MCF 10A (cell line): ENCODE measurements at regions of chr14 and their contacts with region 1.

Region 1: GRCh38 chr14:91177073-91178034 is 63.5 kb downstream of the DGLUCY start:
- DNase-seq: peak; percentile 80
- H3K4me3 Mint-ChIP-seq: no peak overlapping the region
- H3K27ac Mint-ChIP-seq: no peak overlapping the region
- H3K4me1 Mint-ChIP-seq: no peaks in the 10 kb centered on the region
- H3K27me3 Mint-ChIP-seq: no peaks in the 10 kb centered on the region
- CTCF ChIP-seq: peak; percentile 86

Region 2: GRCh38 chr14:90903101-90903500 is 274.3 kb before region 1 on chr14:
- CTCF ChIA-PET with region 1: interaction called, 264 read pairs
- POLR2A ChIA-PET with region 1: interaction called, 12 read pairs
- intact Hi-C with region 1: loop called (anchors 1 kb)
- DNase-seq: peak; percentile 71
- H3K4me3 Mint-ChIP-seq: no peak overlapping the region
- H3K27ac Mint-ChIP-seq: no peak overlapping the region
- H3K4me1 Mint-ChIP-seq: no peaks in the 10 kb centered on the region
- H3K27me3 Mint-ChIP-seq: no peaks in the 10 kb centered on the region
- CTCF ChIP-seq: peak; percentile 81

Region 3: DNA sequence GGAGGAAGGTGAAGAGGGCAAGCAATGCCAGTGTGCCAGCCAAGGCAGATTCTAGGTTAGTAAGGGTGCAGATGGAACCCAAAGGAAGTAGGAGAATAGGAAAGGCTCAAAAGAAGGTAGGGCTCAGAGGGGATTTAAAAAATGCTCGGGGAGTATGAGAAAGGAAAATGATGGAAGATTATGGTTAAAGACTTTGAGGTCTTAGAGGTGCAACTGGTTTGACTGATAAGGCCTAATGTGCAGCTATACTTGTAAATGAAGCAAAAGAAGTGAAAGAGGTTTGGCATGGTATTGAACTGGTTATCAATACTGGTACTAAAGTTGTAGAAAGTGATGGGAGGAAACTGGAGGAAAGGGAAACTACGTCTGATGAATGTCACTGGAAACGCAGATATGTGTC is 211.6 kb before region 1 on chr14:
- CTCF ChIA-PET with region 1: interaction called, 10 read pairs
- POLR2A ChIA-PET with region 1: no interaction called
- intact Hi-C with region 1: no loop called
- DNase-seq: no peak
- H3K4me3 Mint-ChIP-seq: no peak overlapping the region
- H3K27ac Mint-ChIP-seq: no peak overlapping the region
- H3K4me1 Mint-ChIP-seq: peaks cover 10% of the 10 kb centered on the region
- H3K27me3 Mint-ChIP-seq: no peaks in the 10 kb centered on the region
- CTCF ChIP-seq: no peak

Region 4: DNA sequence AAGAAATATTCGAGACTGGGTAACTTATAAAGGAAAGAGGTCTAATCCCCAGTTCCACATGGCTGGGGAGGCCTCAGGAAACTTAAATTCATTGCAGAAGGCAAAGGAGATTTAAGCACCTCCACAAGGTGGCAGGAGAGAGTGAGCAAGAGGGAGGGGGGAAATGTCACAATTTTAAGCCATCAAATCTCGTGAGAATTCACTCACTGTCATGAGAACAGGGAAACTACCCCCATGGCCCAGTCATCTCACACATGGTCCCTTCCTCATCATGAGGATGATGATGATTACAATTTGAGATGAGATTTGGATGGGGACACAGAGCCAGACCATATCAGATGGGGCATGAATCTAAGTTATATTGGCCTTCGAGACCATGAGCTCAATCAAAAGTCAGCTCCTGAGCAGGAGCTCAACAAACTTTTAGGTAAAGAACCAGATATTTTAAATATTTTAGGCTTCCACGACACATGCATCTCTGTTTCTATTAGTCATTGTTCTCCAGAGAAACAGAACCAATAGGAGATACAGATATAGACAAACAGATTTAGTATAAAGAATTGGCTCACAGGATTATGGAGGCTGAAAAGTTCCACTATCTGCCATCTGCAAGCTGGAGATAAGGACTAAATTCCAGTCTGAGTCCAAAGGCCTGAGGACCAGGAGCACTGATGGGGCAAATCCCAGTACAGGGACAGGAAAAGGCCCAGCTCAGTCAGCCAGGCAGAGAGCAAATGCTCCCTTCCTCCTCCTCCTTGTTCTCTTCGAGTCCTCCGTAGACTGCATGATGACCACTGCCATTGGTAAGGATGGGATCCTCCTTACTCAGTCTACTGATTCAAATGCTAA is 38.6 kb before region 1 on chr14:
- CTCF ChIA-PET with region 1: interaction called, 80 read pairs
- POLR2A ChIA-PET with region 1: no interaction called
- intact Hi-C with region 1: loop called (anchors 1 kb)
- DNase-seq: peak; percentile 68
- H3K4me3 Mint-ChIP-seq: no peak overlapping the region
- H3K27ac Mint-ChIP-seq: no peak overlapping the region
- H3K4me1 Mint-ChIP-seq: peaks cover 4% of the 10 kb centered on the region
- H3K27me3 Mint-ChIP-seq: no peaks in the 10 kb centered on the region
- CTCF ChIP-seq: peak; percentile 49

Region 5: DNA sequence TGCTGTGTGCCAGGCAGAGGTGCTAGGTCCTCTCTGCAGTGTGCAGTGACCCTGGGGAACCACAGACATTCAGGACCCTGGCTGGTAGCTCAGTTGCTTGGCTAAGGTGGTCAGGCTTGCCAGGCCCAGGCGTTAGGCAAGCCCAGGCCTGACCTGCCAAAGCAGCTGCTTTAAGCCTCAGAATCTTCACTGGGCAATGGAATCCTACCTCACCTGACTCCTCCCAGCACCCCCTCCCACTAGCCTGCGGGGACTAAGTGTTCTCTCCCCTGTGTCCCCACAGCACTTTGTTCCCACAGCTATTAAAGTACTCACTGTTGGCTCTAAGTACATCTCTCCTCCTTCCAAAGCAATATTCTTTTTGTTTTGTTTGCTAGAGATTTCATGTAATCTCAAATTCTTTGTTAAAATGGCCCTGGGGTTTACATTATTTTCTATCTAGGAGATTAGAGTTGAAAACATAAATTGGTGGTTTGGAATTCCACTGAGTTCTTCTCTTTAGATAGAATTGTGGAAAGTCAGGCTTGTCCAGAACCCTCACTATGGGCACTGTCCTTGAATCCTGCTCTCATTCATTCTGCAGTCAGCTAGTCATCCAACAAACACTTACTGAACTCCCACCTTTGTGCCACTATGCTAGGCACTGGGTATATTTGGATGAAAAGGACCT is 19.1 kb before region 1 on chr14:
- CTCF ChIA-PET with region 1: interaction called, 29 read pairs
- POLR2A ChIA-PET with region 1: interaction called, 3 read pairs
- intact Hi-C with region 1: no loop called
- DNase-seq: peak; percentile 60
- H3K4me3 Mint-ChIP-seq: no peak overlapping the region
- H3K27ac Mint-ChIP-seq: peak overlapping the region; percentile 3
- H3K4me1 Mint-ChIP-seq: peaks cover 29% of the 10 kb centered on the region
- H3K27me3 Mint-ChIP-seq: no peaks in the 10 kb centered on the region
- CTCF ChIP-seq: no peak

Region 6: DNA sequence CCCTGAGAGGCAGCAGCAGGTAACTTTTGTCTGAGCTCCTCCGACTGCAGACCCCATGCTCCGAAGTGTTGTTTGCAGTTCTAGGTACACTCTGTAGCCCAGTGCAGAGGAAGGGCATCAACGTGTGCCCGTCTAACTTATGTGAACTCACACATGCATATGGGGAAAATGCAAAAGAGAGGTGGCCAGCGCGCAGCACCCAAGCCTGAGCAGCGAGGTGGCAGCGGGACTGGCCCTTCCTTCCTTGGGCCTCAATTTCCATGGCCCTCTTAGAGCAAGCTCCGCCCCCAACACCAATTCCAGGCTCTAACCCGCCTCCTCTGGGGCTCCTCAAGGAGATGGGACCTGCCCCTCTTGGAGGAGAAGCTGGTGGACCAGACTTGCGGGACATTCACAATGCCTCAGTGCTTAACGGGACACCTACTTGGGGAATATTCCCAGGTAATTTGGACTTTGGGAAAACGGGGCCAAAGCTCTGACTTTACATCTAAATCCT is 39.4 kb after region 1 on chr14:
- CTCF ChIA-PET with region 1: interaction called, 12 read pairs
- POLR2A ChIA-PET with region 1: no interaction called
- intact Hi-C with region 1: no loop called
- DNase-seq: no peak
- H3K4me3 Mint-ChIP-seq: no peak overlapping the region
- H3K27ac Mint-ChIP-seq: no peak overlapping the region
- H3K4me1 Mint-ChIP-seq: peaks cover 16% of the 10 kb centered on the region
- H3K27me3 Mint-ChIP-seq: no peaks in the 10 kb centered on the region
- CTCF ChIP-seq: no peak

Region 7: DNA sequence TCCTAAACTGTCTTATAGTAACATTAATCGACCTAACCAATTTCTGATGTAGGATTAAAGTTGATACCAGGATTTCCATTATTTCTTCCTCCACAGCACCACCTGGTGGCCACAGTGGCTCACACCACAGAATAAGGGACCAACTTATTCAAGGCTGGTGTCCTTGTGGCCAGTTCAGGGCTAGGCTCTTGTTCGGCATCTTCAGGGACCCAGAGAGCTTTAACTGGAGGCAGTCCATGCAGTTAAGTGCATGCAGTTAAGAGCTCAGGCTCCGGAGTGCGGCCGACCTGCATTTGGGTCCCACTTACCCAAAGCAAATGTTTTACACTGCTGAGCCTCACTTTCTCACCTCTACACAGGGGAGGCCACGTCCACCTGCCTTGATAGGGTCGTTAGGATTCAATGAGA is 109.2 kb after region 1 on chr14:
- CTCF ChIA-PET with region 1: interaction called, 195 read pairs
- POLR2A ChIA-PET with region 1: interaction called, 8 read pairs
- intact Hi-C with region 1: loop called (anchors 1 kb)
- DNase-seq: peak; percentile 83
- H3K4me3 Mint-ChIP-seq: no peak overlapping the region
- H3K27ac Mint-ChIP-seq: no peak overlapping the region
- H3K4me1 Mint-ChIP-seq: peaks cover 23% of the 10 kb centered on the region
- H3K27me3 Mint-ChIP-seq: no peaks in the 10 kb centered on the region
- CTCF ChIP-seq: peak; percentile 76